ENCODE measurements at regions of chr7 and their contacts with region 1.

Region 1: GRCh38 chr7:93799750-93800357 is 90.7 kb downstream of the TFPI2 start:
- DNase-seq: no peak
- ATAC-seq: peak; percentile 54
- H3K4me3 ChIP-seq: no peak overlapping the region
- H3K27ac ChIP-seq: no peak overlapping the region
- H3K4me1 ChIP-seq: no peaks in the 10 kb centered on the region
- H3K27me3 ChIP-seq: no peaks in the 10 kb centered on the region
- CTCF ChIP-seq: peak; percentile 36 to 51 (median 41); a peak in 4 of 6 replicates
- EP300 ChIP-seq: no peak
- POLR2A ChIP-seq: no peak
- RAD21 ChIP-seq: peak; percentile 56

Region 2: GRCh38 chr7:93779115-93779514 is 20.7 kb before region 1 on chr7:
- CTCF ChIA-PET with region 1: interaction called, 36 read pairs
- POLR2A ChIA-PET with region 1: no interaction called
- RAD21 ChIA-PET with region 1: no interaction called
- SMC1A ChIA-PET with region 1: interaction called, 13 read pairs
- in situ Hi-C with region 1: no loop called
- intact Hi-C with region 1: no loop called
- DNase-seq: no peak
- ATAC-seq: no peak
- H3K4me3 ChIP-seq: no peak overlapping the region
- H3K27ac ChIP-seq: no peak overlapping the region
- H3K4me1 ChIP-seq: no peaks in the 10 kb centered on the region
- H3K27me3 ChIP-seq: no peaks in the 10 kb centered on the region
- CTCF ChIP-seq: no peak
- EP300 ChIP-seq: no peak
- POLR2A ChIP-seq: no peak
- RAD21 ChIP-seq: no peak

Region 3: DNA sequence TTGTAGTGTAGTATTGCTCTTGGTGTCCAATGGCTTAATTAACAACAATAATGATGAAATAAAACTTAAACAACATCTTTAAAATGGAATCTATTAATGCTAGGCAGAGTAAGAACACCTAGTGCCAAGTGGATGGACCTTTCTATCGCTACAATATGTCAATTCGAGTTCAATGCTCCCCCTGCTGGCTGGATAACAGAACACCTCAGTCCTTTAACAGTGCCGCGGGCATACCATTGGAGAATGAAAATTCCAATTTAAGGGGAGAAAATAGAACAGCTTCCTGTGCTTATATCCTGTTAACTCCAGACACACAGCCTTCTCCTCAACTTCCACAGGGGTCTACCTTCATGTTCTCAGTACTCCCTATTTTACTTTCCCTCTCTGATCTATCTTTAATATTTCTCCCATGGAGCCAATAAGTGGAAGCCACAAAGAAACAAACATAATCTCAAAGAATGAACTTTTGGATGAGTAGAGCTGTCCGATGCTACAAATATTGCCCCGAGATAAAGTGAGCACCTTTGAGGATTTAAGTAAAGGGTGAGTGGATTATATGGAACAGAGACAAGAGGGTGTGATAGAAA is 636.3 kb after region 1 on chr7:
- CTCF ChIA-PET with region 1: interaction called, 4 read pairs
- POLR2A ChIA-PET with region 1: no interaction called
- RAD21 ChIA-PET with region 1: interaction called, 7 read pairs
- SMC1A ChIA-PET with region 1: interaction called, 3 read pairs
- in situ Hi-C with region 1: no loop called
- intact Hi-C with region 1: loop called (anchors 1 kb)
- DNase-seq: peak; percentile 7
- ATAC-seq: peak; percentile 98
- H3K4me3 ChIP-seq: no peak overlapping the region
- H3K27ac ChIP-seq: no peak overlapping the region
- H3K4me1 ChIP-seq: no peaks in the 10 kb centered on the region
- H3K27me3 ChIP-seq: no peaks in the 10 kb centered on the region; a peak in 1 of 4 replicates
- CTCF ChIP-seq: peak; percentile 75 to 83 (median 76); a peak in 5 of 6 replicates
- EP300 ChIP-seq: no peak
- POLR2A ChIP-seq: no peak
- RAD21 ChIP-seq: peak; percentile 58